ENCODE measurements at regions of chr15 and their contacts with region 1.

Region 1: GRCh38 chr15:40103176-40103858 is 5.4 kb downstream of the BMF start:
- DNase-seq: peak; percentile 76 to 90 (median 82)
- H3K4me3 ChIP-seq: peak overlapping the region in 20 of 59 donors; percentile 1 to 37 (median 18)
- H3K27ac ChIP-seq: peak overlapping the region in 47 of 59 donors; percentile 0 to 84 (median 54)
- H3K27me3 ChIP-seq: no peaks in the 10 kb centered on the region
- CTCF ChIP-seq: peak in 27 of 56 donors; percentile 4 to 57 (median 26)

Region 2: GRCh38 chr15:40081691-40082194 is 21.6 kb before region 1 on chr15:
- intact Hi-C with region 1: loop called in 1 of 2 experiments (anchors 2 kb)
- DNase-seq: peak; percentile 23 to 85 (median 80)
- H3K4me3 ChIP-seq: peak overlapping the region; percentile 1 to 67 (median 44)
- H3K27ac ChIP-seq: peak overlapping the region in 52 of 59 donors; percentile 4 to 82 (median 62)
- H3K27me3 ChIP-seq: peaks cover 0 to 4% (median 0%) of the 10 kb centered on the region in 45 donors
- CTCF ChIP-seq: peak in 24 of 56 donors; percentile 6 to 49 (median 25)

Measured in dorsolateral prefrontal cortex (tissue), 120 donors.